ENCODE measurements at regions of chr17 and their contacts with region 1.

Region 1: GRCh38 chr17:48791128-48792032 is 25.6 kb downstream of the TTLL6 start:
- DNase-seq: peak; percentile 81 to 84
- H3K4me3 ChIP-seq: no peak overlapping the region
- H3K27ac ChIP-seq: no peak overlapping the region
- H3K4me1 ChIP-seq: peaks cover 0 to 7% of the 10 kb centered on the region in 2 donors
- H3K27me3 ChIP-seq: no peaks in the 10 kb centered on the region
- CTCF ChIP-seq: peak in 5 of 6 experiments; percentile 22 to 81 (median 67)
- POLR2A ChIP-seq: no peak

Region 2: DNA sequence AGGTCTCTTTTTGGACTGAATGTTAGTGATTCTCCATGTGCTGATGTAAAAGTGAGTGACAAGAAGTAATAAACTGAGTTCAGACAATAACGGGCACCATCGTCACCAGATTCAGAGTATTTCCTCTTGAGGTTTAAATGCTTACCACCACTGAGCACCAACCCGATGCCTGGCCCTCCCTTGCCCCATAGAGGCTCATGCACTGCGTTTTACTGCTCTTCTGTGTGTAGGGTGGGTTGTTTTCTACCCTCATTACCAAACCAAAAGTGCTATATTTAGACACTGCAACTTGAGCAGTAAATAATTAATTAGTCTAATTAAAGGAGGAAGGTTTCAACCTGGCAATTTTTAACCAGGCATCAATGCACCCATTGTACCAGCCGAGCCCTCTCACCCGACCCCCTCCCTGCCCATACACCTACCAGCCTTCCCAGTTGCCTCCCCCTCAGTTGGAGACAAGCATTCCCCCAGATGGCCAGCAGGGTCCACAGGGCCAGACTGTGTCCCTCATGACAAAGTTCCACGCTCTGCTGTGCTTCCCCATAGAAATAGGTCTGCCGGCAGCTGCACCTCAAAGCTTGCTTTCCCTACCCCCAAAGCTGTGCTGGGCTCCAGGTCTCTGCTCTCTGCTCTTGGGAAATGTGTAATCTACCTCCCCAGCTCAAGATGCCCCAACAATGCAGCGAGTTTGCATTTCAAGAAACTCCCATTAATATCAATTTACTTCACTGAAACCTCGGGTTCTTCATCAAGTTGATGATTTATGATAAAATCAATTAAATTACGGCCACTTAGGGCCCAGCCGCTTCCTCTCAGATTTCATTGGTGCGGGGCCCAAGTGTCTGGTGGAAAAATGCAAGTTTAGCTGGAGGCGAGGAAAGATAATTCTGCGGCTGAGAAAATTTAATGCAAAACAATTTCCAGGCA is 229.2 kb before region 1 on chr17:
- intact Hi-C with region 1: no loop called
- DNase-seq: no peak
- H3K4me3 ChIP-seq: no peak overlapping the region
- H3K27ac ChIP-seq: no peak overlapping the region
- H3K4me1 ChIP-seq: peaks cover 4 to 9% of the 10 kb centered on the region in 2 donors
- H3K27me3 ChIP-seq: peaks cover 21% of the 10 kb centered on the region
- CTCF ChIP-seq: no peak
- POLR2A ChIP-seq: no peak

Region 3: DNA sequence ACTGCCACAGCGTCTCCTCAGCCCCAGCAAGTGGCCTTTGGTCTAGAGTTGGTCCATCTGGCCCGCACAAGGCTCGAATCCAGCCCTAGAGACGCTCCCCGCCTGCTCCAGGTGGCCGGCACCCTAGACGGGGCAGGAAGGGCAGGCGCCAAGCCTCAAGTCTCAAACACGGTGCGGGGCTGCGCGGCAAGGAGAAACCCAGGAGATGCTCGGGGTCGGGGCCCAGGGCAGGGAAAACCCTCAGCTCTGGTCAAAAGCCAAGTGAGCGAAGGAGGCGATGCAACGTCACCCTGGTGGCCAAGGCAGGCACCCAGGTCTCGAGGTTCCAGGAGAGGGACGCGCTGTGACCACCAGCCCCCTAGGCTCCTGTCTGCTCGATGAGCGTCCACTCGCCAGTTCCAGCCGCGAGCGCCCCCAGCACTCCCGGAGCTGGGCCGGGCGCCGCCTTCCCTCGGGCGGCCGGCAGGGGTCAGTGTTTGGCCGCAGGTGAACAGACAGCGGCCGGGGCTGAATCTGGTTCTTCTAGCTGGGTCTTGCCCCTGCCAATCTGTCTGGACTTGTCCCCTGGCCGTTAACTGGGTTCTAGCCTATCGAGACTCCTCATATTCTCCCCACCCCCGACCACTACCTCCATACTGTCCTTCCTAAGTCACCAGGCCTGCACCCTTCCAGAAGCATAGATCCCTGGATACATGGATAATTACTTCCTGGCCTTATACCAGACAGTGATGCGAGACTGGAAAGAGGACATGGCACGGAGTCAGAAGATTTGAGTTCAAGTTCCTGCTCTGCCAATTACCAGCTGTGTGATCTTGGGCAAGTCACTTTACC is 113.0 kb before region 1 on chr17:
- intact Hi-C with region 1: loop called (anchors 10 kb)
- DNase-seq: peak; percentile 57 to 60
- H3K4me3 ChIP-seq: no peak overlapping the region
- H3K27ac ChIP-seq: no peak overlapping the region
- H3K4me1 ChIP-seq: peaks cover 0 to 5% of the 10 kb centered on the region in 2 donors
- H3K27me3 ChIP-seq: peaks cover 4% of the 10 kb centered on the region
- CTCF ChIP-seq: peak; percentile 55 to 97 (median 80)
- POLR2A ChIP-seq: no peak

Region 4: DNA sequence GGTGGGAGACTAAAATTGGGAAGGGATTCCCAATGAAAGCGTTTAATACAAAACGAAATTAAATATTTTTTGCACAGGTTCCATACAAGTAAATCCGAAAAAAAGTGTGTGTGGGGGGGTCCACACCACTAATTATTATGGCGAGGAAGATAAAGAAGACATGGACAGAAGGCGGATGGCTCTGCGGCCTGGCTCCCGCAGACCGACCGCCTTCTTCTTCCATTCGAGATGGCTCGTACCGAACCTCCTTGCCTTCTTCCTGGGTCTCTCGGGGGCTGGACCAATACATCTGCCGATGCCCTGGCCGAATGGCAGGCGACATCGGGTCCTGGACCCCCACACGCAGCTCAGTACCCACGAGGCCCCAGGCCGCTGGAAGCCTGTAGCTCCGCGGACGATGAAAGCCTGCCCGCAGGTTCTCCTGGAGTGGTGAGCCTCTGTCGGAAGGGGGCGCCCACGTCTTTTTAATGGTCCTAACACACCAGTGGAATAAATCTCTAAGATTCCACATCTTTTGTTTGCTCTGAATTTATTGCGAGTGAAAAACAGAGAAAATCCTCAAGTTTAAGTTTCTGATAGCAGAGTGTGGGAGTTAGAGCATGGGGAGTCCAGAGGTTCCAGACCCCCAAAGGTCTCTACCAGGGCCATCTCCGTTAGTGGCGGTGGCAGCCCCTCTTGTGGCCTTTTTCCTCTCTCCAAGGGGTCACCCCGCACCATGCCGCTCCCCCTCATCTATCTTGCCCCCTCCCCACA is 67.0 kb before region 1 on chr17:
- intact Hi-C with region 1: loop called (anchors 5 kb)
- DNase-seq: peak; percentile 83 to 90
- H3K4me3 ChIP-seq: no peak overlapping the region
- H3K27ac ChIP-seq: no peak overlapping the region
- H3K4me1 ChIP-seq: peaks cover 7 to 39% of the 10 kb centered on the region in 2 donors
- H3K27me3 ChIP-seq: peaks cover 85% of the 10 kb centered on the region
- CTCF ChIP-seq: peak; percentile 38 to 75 (median 60)
- POLR2A ChIP-seq: no peak

Measured in thyroid gland (tissue), 4 donors.